ENCODE measurements at regions of chr20 and their contacts with region 1.

Region 1: GRCh38 chr20:58839474-58839874 is 11.2 kb downstream of the GNAS-AS1 start:
- DNase-seq: peak; percentile 85
- H3K4me3 ChIP-seq: peak overlapping the region; percentile 42 to 59
- H3K27ac ChIP-seq: no peak overlapping the region
- H3K4me1 ChIP-seq: no peaks in the 10 kb centered on the region; a peak in 1 of 4 replicates
- H3K27me3 ChIP-seq: peaks cover 9% of the 10 kb centered on the region; the same call in 1 of the 2 replicates
- CTCF ChIP-seq: peak; percentile 62
- EP300 ChIP-seq: no peak
- RAD21 ChIP-seq: peak; percentile 66

Region 2: DNA sequence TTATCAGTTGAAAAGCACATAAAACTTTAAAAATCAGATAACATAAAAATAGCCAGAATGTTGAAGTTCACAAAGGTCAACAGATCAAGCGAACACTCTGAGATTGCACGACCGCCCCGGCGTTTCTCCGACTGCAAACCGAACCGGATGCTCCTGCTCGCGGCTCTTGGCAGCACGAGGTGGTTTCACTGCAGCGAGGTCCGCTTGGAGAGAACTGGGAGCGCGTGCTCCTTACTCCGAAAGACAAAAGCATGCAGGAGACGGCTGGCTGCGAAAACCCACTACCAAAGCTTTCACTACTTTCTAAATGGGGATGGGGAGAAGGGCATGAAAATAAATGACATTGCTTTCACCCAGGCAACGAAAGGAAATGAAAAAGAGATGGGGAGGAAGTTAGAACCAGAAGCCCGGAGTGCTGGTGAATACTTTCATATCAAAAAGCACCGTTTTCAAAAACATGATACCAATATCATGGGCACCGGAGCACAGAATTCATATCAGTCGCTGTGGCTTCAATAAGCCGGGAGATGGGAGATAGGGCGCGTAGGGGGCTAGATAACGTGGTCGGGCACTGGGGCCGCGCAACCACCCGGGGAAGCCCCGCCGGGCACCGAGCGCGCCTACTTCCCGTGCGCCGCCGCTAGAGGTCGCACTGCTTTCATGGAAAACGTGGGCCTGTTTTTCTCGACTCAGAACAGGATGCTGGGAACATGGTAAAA is 602.7 kb before region 1 on chr20:
- CTCF ChIA-PET with region 1: interaction called, 48 read pairs
- POLR2A ChIA-PET with region 1: no interaction called
- DNase-seq: peak; percentile 89
- H3K4me3 ChIP-seq: peak overlapping the region; percentile 40 to 67
- H3K27ac ChIP-seq: peak overlapping the region; percentile 74 to 92
- H3K4me1 ChIP-seq: peaks cover 12 to 15% of the 10 kb centered on the region in 2 experiments; a peak in 3 of 4 replicates
- H3K27me3 ChIP-seq: no peaks in the 10 kb centered on the region
- CTCF ChIP-seq: peak; percentile 97
- EP300 ChIP-seq: no peak
- RAD21 ChIP-seq: peak; percentile 90

Region 3: GRCh38 chr20:58246346-58246745 is 593.1 kb before region 1 on chr20:
- CTCF ChIA-PET with region 1: interaction called, 12 read pairs
- POLR2A ChIA-PET with region 1: no interaction called
- DNase-seq: no peak
- H3K4me3 ChIP-seq: no peak overlapping the region
- H3K27ac ChIP-seq: no peak overlapping the region
- H3K4me1 ChIP-seq: peaks cover 0 to 5% of the 10 kb centered on the region in 2 experiments; a peak in 1 of 4 replicates
- H3K27me3 ChIP-seq: no peaks in the 10 kb centered on the region
- CTCF ChIP-seq: peak; percentile 48
- EP300 ChIP-seq: no peak
- RAD21 ChIP-seq: peak; percentile 53

Region 4: GRCh38 chr20:58659841-58660240 is 179.6 kb before region 1 on chr20:
- CTCF ChIA-PET with region 1: interaction called, 46 read pairs
- POLR2A ChIA-PET with region 1: no interaction called
- DNase-seq: no peak
- H3K4me3 ChIP-seq: no peak overlapping the region
- H3K27ac ChIP-seq: 0 out of 4 replicates have a peak overlapping the region, but pooled peaks of 1 of the 2 experiments have one; percentile 5
- H3K4me1 ChIP-seq: peaks cover 23 to 26% of the 10 kb centered on the region in 2 experiments; a peak in 3 of 4 replicates
- H3K27me3 ChIP-seq: no peaks in the 10 kb centered on the region
- CTCF ChIP-seq: no peak
- EP300 ChIP-seq: no peak
- RAD21 ChIP-seq: no peak

Measured in SK-N-SH (cell line).